ENCODE measurements at regions of chr5 and their contacts with region 1.

Region 1: DNA sequence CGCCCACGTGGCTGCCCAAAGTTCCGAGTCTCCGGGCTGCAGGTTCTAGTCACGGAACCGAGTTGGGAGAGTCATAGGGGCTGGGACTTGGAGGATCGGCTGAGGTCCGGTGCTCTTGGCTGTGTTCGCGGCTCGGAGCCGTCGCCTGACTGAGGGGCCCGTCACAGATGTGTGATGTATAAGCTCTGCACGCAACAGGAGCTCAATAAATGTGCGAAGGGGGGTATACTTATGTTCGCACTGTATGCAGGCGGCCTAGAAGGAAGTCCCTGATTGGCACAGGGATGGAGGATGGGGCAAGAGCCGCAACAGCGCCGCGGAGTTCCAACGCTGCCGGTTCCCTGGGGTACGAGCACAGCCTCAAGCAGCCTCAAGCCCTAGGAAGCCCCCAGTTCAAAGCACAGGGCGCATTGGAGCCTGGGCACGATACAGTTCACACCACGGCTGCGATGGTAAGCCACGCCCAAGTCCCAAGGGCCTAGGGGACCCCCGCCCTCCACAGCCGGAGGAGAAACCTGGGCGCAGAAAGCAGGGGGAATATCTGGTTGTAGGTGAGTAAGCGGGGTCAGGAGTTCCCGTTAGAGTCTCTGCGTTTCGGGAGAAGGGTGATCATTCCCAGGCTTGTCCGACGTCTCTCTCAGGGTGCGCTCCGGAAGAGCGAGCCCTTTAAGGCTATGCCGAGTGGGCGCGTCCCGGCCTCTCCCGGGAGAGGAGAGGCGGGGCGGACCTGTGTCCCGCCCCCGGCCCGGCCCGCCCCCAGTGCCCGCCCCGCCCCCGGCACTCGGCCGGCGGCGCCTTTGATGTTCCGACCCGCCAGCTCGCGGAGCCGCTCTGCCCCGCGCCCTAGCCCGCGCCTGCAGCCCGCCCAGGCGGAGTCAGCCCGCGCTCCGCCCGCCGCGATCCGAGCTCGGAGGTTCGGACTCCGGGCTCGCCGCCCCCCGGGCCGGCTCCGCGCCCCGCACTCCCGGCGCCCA is at the start of gene TCF7:
- DNase-seq: peak; percentile 88
- ATAC-seq: peak; percentile 40
- H3K4me3 Mint-ChIP-seq: peak within 1 kb of the TSS; percentile 85
- H3K27ac Mint-ChIP-seq: peak within 1 kb of the TSS; percentile 97
- H3K4me1 Mint-ChIP-seq: peaks cover 61% of the 10 kb centered on the region
- H3K27me3 Mint-ChIP-seq: no peaks in the 10 kb centered on the region
- total RNA-seq, gene TCF7: 94.8 to 117 TPM

Region 2: GRCh38 chr5:133968049-133968980 is 145.9 kb before region 1 on chr5 and contains the start of gene C5orf15:
- CTCF ChIA-PET with region 1: no interaction called
- POLR2A ChIA-PET with region 1: no interaction called
- intact Hi-C with region 1: loop called in 1 of 2 experiments (anchors 5 kb)
- DNase-seq: peak; percentile 97
- ATAC-seq: peak; percentile 97
- H3K4me3 Mint-ChIP-seq: peak within 1 kb of the TSS; percentile 94
- H3K27ac Mint-ChIP-seq: peak within 1 kb of the TSS; percentile 90
- H3K4me1 Mint-ChIP-seq: peaks cover 51% of the 10 kb centered on the region
- H3K27me3 Mint-ChIP-seq: no peaks in the 10 kb centered on the region
- total RNA-seq, gene C5orf15: 28.7 to 38.7 TPM

Region 3: DNA sequence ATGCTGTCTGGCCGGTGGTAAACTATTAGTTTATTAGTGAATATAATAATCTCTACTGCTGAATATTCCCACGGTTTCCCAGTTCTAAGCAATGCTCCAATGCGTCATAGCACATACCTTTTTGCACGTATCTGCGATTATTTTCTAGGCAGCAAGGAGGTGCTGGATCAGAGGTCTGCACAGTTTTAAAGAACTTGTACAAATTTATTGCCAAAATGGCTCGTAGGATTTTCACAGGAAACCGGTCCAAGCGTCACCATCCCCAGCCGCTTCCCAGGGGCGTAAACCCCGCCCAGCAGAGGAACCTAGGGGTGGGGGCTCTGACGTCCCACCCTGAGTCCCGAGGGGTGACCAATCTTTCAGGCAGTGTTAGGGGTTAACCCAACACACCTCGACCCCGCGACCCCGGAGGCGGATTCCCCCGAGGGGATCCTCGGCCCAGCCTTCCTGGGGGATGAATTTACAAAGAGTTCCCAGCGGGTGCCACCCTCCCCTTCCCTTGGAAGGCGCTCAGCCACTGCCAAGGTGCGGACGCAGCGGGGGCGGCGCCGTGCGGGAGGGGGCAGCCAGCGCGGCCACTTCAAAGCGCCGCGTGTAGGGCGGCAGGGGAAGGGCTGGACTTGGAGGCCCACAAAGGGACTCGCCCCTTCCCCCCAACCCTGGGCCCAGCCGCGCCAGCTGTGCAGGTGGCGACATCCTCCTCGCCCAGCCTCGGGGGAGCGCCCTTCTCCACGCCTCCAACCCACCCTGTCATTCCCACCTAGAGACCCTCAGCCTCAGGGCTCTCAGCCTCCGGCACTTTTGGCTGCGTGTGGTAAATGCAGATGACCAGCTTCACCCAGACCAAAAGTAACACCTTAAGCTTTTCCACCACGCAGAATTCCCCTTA is 43.2 kb before region 1 on chr5:
- CTCF ChIA-PET with region 1: interaction called, 9 read pairs
- POLR2A ChIA-PET with region 1: interaction called, 16 read pairs
- intact Hi-C with region 1: loop called (anchors 1 kb)
- DNase-seq: peak; percentile 77
- ATAC-seq: peak; percentile 1
- H3K4me3 Mint-ChIP-seq: peak overlapping the region; percentile 73
- H3K27ac Mint-ChIP-seq: peak overlapping the region; percentile 89
- H3K4me1 Mint-ChIP-seq: peaks cover 68% of the 10 kb centered on the region
- H3K27me3 Mint-ChIP-seq: no peaks in the 10 kb centered on the region

Region 4: GRCh38 chr5:134101686-134102439 is 12.3 kb before region 1 on chr5:
- CTCF ChIA-PET with region 1: interaction called, 16 read pairs
- POLR2A ChIA-PET with region 1: interaction called, 59 read pairs
- intact Hi-C with region 1: loop called (anchors 1 kb)
- DNase-seq: peak; percentile 84
- ATAC-seq: peak; percentile 11
- H3K4me3 Mint-ChIP-seq: no peak overlapping the region
- H3K27ac Mint-ChIP-seq: no peak overlapping the region
- H3K4me1 Mint-ChIP-seq: peaks cover 93% of the 10 kb centered on the region
- H3K27me3 Mint-ChIP-seq: peaks cover 2% of the 10 kb centered on the region

Region 5: DNA sequence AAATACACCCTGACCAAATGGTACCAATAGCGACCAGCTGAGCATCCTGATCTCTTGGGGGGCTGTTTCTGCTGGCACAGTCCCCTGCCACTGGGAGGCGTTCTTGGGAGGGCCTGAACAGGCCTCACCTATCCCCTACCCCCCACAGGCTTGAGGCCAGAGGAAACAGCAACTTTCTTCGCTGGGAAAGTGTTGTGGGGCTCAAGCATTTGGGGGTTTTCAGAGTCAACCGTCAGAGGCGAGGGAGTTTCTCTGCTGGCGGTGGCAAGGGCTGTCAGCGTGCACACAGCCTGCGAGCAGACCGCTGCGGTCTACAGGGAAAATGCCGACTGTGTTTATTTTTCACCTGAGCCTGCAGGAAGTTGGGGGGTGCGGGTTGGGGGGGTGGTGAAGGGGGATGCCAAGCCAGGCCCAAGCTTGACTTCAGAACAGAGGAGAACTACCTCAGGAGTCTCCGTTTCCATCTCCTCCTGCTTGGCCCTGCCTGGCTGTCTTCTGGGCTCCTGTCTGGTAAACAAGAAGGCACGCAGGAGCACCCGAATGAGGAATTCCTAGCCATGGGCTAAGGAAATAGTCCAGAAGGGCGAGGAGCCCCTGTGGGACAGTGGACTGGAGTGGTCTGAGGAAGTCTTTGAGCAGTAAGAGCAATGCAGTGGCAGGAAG is 18.3 kb after region 1 on chr5:
- CTCF ChIA-PET with region 1: interaction called, 92 read pairs
- POLR2A ChIA-PET with region 1: interaction called, 16 read pairs
- intact Hi-C with region 1: loop called (anchors 1 kb)
- DNase-seq: peak; percentile 86
- ATAC-seq: peak; percentile 60
- H3K4me3 Mint-ChIP-seq: peak overlapping the region; percentile 41
- H3K27ac Mint-ChIP-seq: peak overlapping the region; percentile 87
- H3K4me1 Mint-ChIP-seq: peaks cover 98% of the 10 kb centered on the region
- H3K27me3 Mint-ChIP-seq: no peaks in the 10 kb centered on the region

Region 6: GRCh38 chr5:134176511-134177368 is 62.6 kb after region 1 on chr5 and contains the start of gene SKP1:
- CTCF ChIA-PET with region 1: no interaction called
- POLR2A ChIA-PET with region 1: interaction called, 4 read pairs
- intact Hi-C with region 1: loop called (anchors 2 to 5 kb)
- DNase-seq: peak; percentile 91
- ATAC-seq: peak; percentile 85
- H3K4me3 Mint-ChIP-seq: peak within 1 kb of the TSS; percentile 98
- H3K27ac Mint-ChIP-seq: peak within 1 kb of the TSS; percentile 95
- H3K4me1 Mint-ChIP-seq: peaks cover 32% of the 10 kb centered on the region
- H3K27me3 Mint-ChIP-seq: no peaks in the 10 kb centered on the region
- total RNA-seq, gene SKP1: 218 to 265 TPM